Activated naive CD4-positive, alpha-beta T cell treated with anti-CD3 and anti-CD28 coated beads for 36 hours (primary cell): ENCODE measurements at regions of chr3 and their contacts with region 1.

Region 1: GRCh38 chr3:196073188-196073838 is 8.6 kb downstream of the TFRC start:
- DNase-seq: peak; percentile 81
- H3K4me3 Mint-ChIP-seq: no peak overlapping the region
- H3K27ac Mint-ChIP-seq: peak overlapping the region; percentile 82
- H3K4me1 Mint-ChIP-seq: peaks cover 34% of the 10 kb centered on the region
- H3K27me3 Mint-ChIP-seq: no peaks in the 10 kb centered on the region

Region 2: GRCh38 chr3:196039358-196039757 is 34.0 kb before region 1 on chr3:
- CTCF ChIA-PET with region 1: interaction called, 16 read pairs
- intact Hi-C with region 1: no loop called
- DNase-seq: no peak
- H3K4me3 Mint-ChIP-seq: no peak overlapping the region
- H3K27ac Mint-ChIP-seq: no peak overlapping the region
- H3K4me1 Mint-ChIP-seq: peaks cover 10% of the 10 kb centered on the region
- H3K27me3 Mint-ChIP-seq: no peaks in the 10 kb centered on the region

Region 3: DNA sequence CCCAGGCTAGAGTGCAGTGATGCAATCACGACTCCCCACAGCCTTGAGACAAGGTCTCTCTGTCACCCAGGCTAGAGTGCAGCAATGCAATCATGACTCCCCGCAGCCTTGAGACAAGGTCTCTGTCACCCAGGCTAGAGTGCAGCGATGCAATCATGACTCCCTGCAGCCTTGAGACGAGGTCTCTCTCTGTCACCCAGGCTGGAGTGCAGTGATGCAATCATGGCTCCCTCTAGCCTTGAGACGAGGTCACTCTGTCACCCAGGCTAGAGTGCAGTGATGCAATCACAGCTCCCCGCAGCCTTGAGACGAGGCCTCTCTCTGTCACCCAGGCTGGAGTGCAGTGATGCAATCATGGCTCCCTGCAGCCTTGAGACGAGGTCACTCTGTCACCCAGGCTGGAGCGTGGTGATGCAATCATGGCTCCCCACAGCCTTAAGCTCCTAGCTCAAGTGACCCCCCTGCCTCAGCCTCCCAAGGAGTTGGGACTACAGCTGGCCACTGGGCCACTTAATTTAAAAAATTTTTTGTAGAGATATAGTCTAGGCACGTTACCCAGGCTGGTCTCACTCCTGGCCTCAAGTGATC is 17.5 kb before region 1 on chr3:
- CTCF ChIA-PET with region 1: interaction called, 10 read pairs
- intact Hi-C with region 1: no loop called
- DNase-seq: no peak
- H3K4me3 Mint-ChIP-seq: no peak overlapping the region
- H3K27ac Mint-ChIP-seq: peak overlapping the region; percentile 0
- H3K4me1 Mint-ChIP-seq: peaks cover 1% of the 10 kb centered on the region
- H3K27me3 Mint-ChIP-seq: no peaks in the 10 kb centered on the region

Region 4: GRCh38 chr3:196192036-196192523 is 118.8 kb after region 1 on chr3:
- CTCF ChIA-PET with region 1: interaction called, 186 read pairs
- intact Hi-C with region 1: loop called (anchors 1 kb)
- DNase-seq: peak; percentile 82
- H3K4me3 Mint-ChIP-seq: peak overlapping the region; percentile 55
- H3K27ac Mint-ChIP-seq: peak overlapping the region; percentile 92
- H3K4me1 Mint-ChIP-seq: peaks cover 38% of the 10 kb centered on the region
- H3K27me3 Mint-ChIP-seq: no peaks in the 10 kb centered on the region

Region 5: GRCh38 chr3:196219194-196219978 is 146.1 kb after region 1 on chr3:
- CTCF ChIA-PET with region 1: interaction called, 11 read pairs
- intact Hi-C with region 1: no loop called
- DNase-seq: peak; percentile 89
- H3K4me3 Mint-ChIP-seq: peak overlapping the region; percentile 66
- H3K27ac Mint-ChIP-seq: peak overlapping the region; percentile 84
- H3K4me1 Mint-ChIP-seq: peaks cover 26% of the 10 kb centered on the region
- H3K27me3 Mint-ChIP-seq: no peaks in the 10 kb centered on the region